Natural killer cell (primary cell): ENCODE measurements at regions of chr7 and their contacts with region 1.

Region 1: GRCh38 chr7:157336383-157337315 is at the start of gene DNAJB6:
- DNase-seq: peak; percentile 97 to 98
- ATAC-seq: peak; percentile 80 to 91 (median 85)
- H3K4me3 ChIP-seq: peak within 1 kb of the TSS; percentile 96
- H3K4me3 Mint-ChIP-seq: peak within 1 kb of the TSS; percentile 99
- H3K27ac ChIP-seq: peak within 1 kb of the TSS; percentile 91
- H3K27ac Mint-ChIP-seq: peak within 1 kb of the TSS; percentile 95 to 96
- H3K4me1 ChIP-seq: peaks cover 42% of the 10 kb centered on the region
- H3K4me1 Mint-ChIP-seq: peaks cover 43 to 46% of the 10 kb centered on the region in 2 donors
- H3K27me3 ChIP-seq: no peaks in the 10 kb centered on the region
- H3K27me3 Mint-ChIP-seq: peaks cover 0 to 4% of the 10 kb centered on the region in 2 donors
- CTCF ChIP-seq: no peak
- total RNA-seq, gene DNAJB6: 309 to 343 (median 340) TPM

Region 2: DNA sequence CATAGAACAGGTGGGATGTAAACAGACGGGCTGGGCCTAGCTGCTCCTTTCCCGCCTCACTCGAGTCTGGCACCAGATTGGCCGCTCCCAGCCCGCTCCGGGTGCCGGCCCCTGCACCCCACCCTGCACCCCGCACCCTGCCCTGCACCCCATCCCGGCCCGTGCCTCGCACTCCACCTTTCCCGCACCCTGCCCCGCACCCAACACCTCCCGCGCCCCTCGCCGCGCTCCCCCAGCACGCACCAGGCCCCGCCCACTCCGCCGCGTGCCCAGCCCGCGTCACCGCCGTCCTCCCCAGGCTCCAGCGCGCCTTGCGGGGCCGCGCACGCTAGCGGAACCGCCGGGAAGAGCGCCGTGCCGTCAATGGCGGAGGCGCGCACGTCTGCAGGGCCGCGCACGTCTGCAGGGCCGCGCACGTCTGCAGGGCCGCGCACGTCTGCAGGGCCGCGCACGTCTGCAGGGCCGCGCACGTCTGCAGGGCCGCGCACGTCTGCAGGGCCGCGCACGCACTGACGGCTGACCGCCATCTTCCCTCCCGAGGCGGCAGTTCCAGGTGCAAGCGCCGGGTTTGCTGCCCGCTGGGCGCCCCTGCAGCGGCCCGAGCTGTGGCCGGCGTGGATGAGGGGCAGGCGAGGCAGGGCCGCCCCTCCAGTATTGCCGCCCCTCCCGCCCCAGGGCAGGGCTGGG is 198.1 kb before region 1 on chr7 and contains the start of gene UBE3C:
- intact Hi-C with region 1: loop called (anchors 1 kb)
- DNase-seq: peak; percentile 91 to 97
- ATAC-seq: peak; percentile 81 to 93 (median 82)
- H3K4me3 ChIP-seq: peak within 1 kb of the TSS; percentile 75
- H3K4me3 Mint-ChIP-seq: peak within 1 kb of the TSS; percentile 82
- H3K27ac ChIP-seq: peak within 1 kb of the TSS; percentile 91
- H3K27ac Mint-ChIP-seq: peak within 1 kb of the TSS; percentile 81 to 92
- H3K4me1 ChIP-seq: peaks cover 27% of the 10 kb centered on the region
- H3K4me1 Mint-ChIP-seq: peaks cover 37 to 43% of the 10 kb centered on the region in 2 donors
- H3K27me3 ChIP-seq: no peaks in the 10 kb centered on the region
- H3K27me3 Mint-ChIP-seq: no peaks in the 10 kb centered on the region
- CTCF ChIP-seq: no peak
- total RNA-seq, gene UBE3C: 44.6 to 56.7 (median 55.5) TPM

Region 3: DNA sequence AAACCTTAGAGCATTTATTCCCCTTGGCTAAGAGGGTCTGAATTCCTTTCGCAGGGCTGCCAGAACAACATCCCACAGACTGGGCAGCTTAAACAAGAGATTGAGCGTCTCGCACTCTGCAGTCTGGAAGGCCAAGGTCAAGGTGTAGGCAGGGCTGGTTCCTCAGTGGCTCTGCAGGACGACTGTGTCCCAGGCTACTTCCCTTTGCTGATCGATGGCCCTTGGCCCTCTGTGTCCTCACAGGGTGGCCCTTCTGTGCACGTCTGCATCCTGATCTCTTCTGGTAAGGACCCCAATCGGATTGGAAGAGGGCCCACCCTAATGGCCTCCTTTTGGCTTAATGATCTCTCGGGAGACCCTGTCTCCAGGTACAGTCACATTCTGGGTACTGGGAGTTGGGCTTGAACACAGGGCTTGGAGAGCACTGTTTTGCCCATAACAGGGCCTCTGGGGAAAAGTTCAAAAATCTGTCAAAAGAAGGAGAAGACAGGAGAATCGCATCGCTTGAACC is 35.0 kb before region 1 on chr7:
- intact Hi-C with region 1: loop called (anchors 1 kb)
- DNase-seq: no peak
- ATAC-seq: no peak
- H3K4me3 ChIP-seq: peak overlapping the region; percentile 20
- H3K4me3 Mint-ChIP-seq: peak overlapping the region; percentile 55
- H3K27ac ChIP-seq: peak overlapping the region; percentile 83
- H3K27ac Mint-ChIP-seq: peak overlapping the region; percentile 90 to 95
- H3K4me1 ChIP-seq: peaks cover 54% of the 10 kb centered on the region
- H3K4me1 Mint-ChIP-seq: peaks cover 57 to 70% of the 10 kb centered on the region in 2 donors
- H3K27me3 ChIP-seq: no peaks in the 10 kb centered on the region
- H3K27me3 Mint-ChIP-seq: no peaks in the 10 kb centered on the region
- CTCF ChIP-seq: no peak

Region 4: DNA sequence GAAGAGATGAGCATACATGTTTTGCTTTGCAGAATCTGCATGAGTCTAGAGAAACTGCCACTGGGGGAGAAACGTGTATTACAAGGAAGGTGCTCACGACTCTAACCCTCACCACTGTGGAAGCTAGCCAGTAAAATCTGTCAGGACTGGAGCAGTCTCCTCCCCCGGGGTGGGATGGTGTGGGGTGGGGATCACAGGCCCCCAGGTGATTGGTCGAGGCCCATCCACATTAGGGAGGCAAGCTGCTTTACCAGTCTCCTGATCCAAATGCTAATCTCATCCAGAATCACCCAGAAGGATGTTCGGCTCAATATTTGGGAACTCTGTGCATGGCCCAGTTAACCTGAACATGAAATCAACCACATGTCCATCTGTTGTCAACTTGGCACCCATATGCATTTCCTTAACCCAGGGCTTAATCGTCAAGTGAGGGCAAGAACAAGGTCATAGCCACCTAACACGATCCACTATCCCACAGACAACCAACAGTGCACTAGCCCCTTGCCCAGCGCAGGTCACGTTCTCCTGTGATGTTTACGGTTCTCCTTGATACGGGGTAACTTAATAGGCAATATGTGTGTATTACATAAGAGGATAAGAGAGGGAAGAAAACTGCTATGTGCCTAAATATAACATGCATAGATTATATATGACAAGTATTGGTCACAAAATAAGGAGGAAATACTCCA is 40.9 kb after region 1 on chr7:
- intact Hi-C with region 1: loop called (anchors 5 kb)
- DNase-seq: no peak
- ATAC-seq: peak in 2 of 3 donors; percentile 11 to 19
- H3K4me3 ChIP-seq: no peak overlapping the region
- H3K4me3 Mint-ChIP-seq: no peak overlapping the region
- H3K27ac ChIP-seq: no peak overlapping the region
- H3K27ac Mint-ChIP-seq: peak overlapping the region; percentile 66 to 72
- H3K4me1 ChIP-seq: peaks cover 25% of the 10 kb centered on the region
- H3K4me1 Mint-ChIP-seq: peaks cover 83 to 92% of the 10 kb centered on the region in 2 donors
- H3K27me3 ChIP-seq: no peaks in the 10 kb centered on the region
- H3K27me3 Mint-ChIP-seq: no peaks in the 10 kb centered on the region
- CTCF ChIP-seq: no peak